Activated T-helper 1 cell treated with anti-CD3 and anti-CD28 coated beads, Interleukin-12 subunit alpha, Interleukin-12 subunit beta, Interleukin-2, Interleukin-4 antibody, amounts not matched to agents 30 ng/mL and 10 ng/mL and 1 ng/mL, durations not matched to agents 14 hours and 24 hours and 36 hours (primary cell): ENCODE measurements at regions of chr7 and their contacts with region 1.

Region 1: GRCh38 chr7:128361411-128362379 is at the start of gene PRRT4:
- DNase-seq: no peak
- H3K4me3 Mint-ChIP-seq: peak within 1 kb of the TSS; percentile 77
- H3K27ac Mint-ChIP-seq: no peak within 1 kb of the TSS
- H3K4me1 Mint-ChIP-seq: peaks cover 21% of the 10 kb centered on the region
- H3K27me3 Mint-ChIP-seq: peaks cover 74% of the 10 kb centered on the region
- total RNA-seq, gene PRRT4: 0.10 and 0.21 TPM in 2 replicates

Region 2: DNA sequence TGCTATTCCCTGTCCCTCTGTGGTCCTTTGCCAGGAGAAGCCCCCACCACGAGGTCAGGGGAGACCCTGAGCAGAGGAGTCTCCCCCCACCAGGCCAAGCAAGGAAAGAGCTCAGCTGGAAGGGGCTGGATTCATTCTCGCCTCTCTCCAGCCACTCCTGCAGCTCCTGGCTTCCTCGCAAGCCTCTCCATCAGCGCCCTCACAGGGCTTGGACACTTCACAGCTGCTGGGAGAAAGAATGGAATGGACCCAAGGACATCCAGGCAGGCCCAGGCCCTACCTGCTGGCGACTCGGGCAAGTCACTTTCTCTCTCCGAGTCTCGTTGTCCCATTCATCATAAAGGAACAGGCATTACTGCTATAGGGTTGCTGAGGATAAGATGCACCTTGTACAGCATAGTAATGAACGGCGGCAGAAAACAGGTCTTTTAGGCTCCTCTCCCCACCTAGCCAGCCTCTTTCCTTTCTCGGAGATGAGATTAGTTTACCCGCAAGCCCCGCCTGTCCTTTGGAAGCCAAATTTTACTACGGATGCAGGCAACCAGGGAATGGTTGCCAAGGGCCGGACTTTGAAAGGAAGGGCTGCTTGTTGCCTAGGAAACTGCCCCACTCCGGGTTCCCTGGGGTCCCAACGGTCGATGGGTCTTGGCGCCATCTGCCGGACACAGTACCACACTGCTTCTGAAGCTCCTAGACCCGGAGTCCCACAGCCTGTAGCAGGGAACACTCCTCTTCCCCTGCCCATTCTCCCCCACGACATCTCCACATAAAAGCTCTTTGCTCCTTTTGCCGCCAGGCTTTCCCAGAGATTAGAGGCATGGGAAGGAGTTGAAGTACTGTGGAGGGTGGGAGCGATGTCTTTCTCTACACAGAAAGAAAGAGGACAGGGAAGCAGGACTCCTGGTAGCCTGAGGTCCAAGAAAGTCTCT is 25.8 kb after region 1 on chr7:
- intact Hi-C with region 1: loop called (anchors 2 kb)
- DNase-seq: peak; percentile 43
- H3K4me3 Mint-ChIP-seq: no peak overlapping the region
- H3K27ac Mint-ChIP-seq: no peak overlapping the region
- H3K4me1 Mint-ChIP-seq: no peaks in the 10 kb centered on the region
- H3K27me3 Mint-ChIP-seq: no peaks in the 10 kb centered on the region